ENCODE measurements at regions of chr19 and their contacts with region 1.

Region 1: GRCh38 chr19:7799640-7800355 is 30.2 kb upstream of the EVI5L start:
- DNase-seq: peak; percentile 73
- H3K4me3 ChIP-seq: peak overlapping the region in 1 of 2 experiments; percentile 54; a peak in 2 of 4 replicates
- H3K27ac ChIP-seq: no peak overlapping the region
- H3K4me1 ChIP-seq: no peaks in the 10 kb centered on the region
- H3K27me3 ChIP-seq: peaks cover 43% of the 10 kb centered on the region
- CTCF ChIP-seq: peak; percentile 65
- EP300 ChIP-seq: no peak
- RAD21 ChIP-seq: peak; percentile 80

Region 2: GRCh38 chr19:7355151-7355820 is 444.5 kb before region 1 on chr19:
- CTCF ChIA-PET with region 1: interaction called, 19 read pairs
- POLR2A ChIA-PET with region 1: no interaction called
- DNase-seq: no peak
- H3K4me3 ChIP-seq: no peak overlapping the region
- H3K27ac ChIP-seq: no peak overlapping the region
- H3K4me1 ChIP-seq: no peaks in the 10 kb centered on the region
- H3K27me3 ChIP-seq: no peaks in the 10 kb centered on the region
- CTCF ChIP-seq: no peak
- EP300 ChIP-seq: no peak
- RAD21 ChIP-seq: no peak

Region 3: DNA sequence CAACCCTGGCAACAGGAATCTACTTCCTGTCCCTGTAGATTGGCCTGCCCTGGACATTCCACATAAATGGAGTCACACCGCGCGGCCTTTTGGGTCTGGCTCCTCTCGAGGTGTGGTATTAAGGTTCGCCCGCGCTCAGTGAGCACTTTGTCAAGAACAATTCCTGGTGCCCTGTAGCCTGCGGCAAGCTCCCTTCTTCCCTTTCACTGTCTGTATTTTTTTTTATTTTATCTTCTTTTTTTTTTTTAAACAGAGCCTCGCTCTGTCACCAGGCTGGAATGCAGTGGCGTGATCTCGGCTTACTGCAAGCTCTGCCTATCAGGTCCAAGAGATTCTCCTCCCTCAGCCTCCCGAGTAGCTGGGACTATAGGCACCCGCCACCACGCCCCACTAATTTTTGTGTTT is 339.2 kb before region 1 on chr19:
- CTCF ChIA-PET with region 1: no interaction called
- POLR2A ChIA-PET with region 1: no interaction called
- DNase-seq: no peak
- H3K4me3 ChIP-seq: no peak overlapping the region
- H3K27ac ChIP-seq: no peak overlapping the region
- H3K4me1 ChIP-seq: no peaks in the 10 kb centered on the region
- H3K27me3 ChIP-seq: no peaks in the 10 kb centered on the region
- CTCF ChIP-seq: no peak
- EP300 ChIP-seq: no peak
- RAD21 ChIP-seq: no peak

Region 4: DNA sequence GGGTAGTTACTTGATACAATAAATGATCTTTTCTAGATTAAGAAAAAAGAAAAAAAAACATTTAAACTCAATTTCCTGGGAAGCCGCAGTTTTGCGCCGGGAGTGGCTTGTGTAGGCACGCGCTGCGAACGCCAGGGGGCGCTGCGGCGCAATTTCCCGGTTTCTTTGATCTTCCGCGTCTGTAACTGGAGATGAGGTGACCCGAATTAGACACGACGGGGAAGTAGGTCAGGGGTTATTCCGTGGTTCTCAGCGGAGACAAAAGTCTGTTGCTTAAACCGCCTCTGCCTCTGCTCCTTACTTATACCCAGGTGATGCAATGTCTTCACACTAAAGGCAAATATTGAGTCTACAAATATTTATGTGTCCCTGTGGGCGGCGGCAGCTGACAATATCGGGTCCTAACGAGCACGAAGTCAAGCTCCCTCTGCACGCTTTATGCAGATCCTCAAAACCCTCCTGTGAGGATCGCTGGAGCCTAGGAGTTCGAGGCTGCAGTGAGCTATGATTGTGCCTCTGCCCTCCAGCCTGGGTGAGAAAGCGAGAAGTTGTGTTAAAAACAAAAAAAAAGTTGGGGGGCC is 147.6 kb before region 1 on chr19:
- CTCF ChIA-PET with region 1: interaction called, 25 read pairs
- POLR2A ChIA-PET with region 1: no interaction called
- DNase-seq: peak; percentile 89
- H3K4me3 ChIP-seq: peak overlapping the region; percentile 23 to 61; a peak in 3 of 4 replicates
- H3K27ac ChIP-seq: no peak overlapping the region
- H3K4me1 ChIP-seq: peaks cover 0 to 3% of the 10 kb centered on the region in 2 experiments; a peak in 1 of 4 replicates
- H3K27me3 ChIP-seq: peaks cover 34% of the 10 kb centered on the region
- CTCF ChIP-seq: peak; percentile 99
- EP300 ChIP-seq: no peak
- RAD21 ChIP-seq: peak; percentile 62

Region 5: GRCh38 chr19:7674010-7675005 is 125.5 kb before region 1 on chr19:
- CTCF ChIA-PET with region 1: interaction called, 10 read pairs
- POLR2A ChIA-PET with region 1: no interaction called
- DNase-seq: peak; percentile 81
- H3K4me3 ChIP-seq: no peak overlapping the region
- H3K27ac ChIP-seq: no peak overlapping the region
- H3K4me1 ChIP-seq: no peaks in the 10 kb centered on the region; a peak in 1 of 4 replicates
- H3K27me3 ChIP-seq: peaks cover 56% of the 10 kb centered on the region
- CTCF ChIP-seq: no peak
- EP300 ChIP-seq: no peak
- RAD21 ChIP-seq: no peak

Region 6: GRCh38 chr19:7685541-7686416 is 114.0 kb before region 1 on chr19:
- CTCF ChIA-PET with region 1: interaction called, 35 read pairs
- POLR2A ChIA-PET with region 1: no interaction called
- DNase-seq: no peak
- H3K4me3 ChIP-seq: no peak overlapping the region
- H3K27ac ChIP-seq: no peak overlapping the region
- H3K4me1 ChIP-seq: peaks cover 0 to 9% of the 10 kb centered on the region in 2 experiments; a peak in 1 of 4 replicates
- H3K27me3 ChIP-seq: peaks cover 19% of the 10 kb centered on the region; the same call in 1 of the 2 replicates
- CTCF ChIP-seq: no peak
- EP300 ChIP-seq: no peak
- RAD21 ChIP-seq: no peak

Region 7: DNA sequence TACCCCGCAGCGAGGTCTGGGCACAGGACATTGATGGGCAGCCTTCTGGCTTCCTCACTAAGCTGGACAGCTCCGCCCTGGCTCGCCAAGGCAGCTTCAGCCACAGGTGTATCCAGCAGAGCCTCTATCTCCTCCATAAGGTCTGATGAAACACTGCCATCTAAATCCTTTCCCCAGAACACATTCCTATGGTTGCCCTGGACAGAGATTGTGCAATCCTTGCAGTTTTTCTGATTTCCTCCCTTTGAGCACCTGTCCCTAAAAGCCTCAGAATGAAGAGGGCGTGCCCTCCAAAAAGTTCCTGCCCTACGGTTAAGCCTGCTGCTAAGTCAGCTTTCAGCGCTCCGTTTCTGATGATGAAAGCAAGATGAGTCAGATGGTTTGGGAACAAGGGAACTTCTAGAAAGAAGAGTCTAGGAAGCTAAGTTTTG is 15.8 kb before region 1 on chr19:
- CTCF ChIA-PET with region 1: interaction called, 28 read pairs
- POLR2A ChIA-PET with region 1: no interaction called
- DNase-seq: no peak
- H3K4me3 ChIP-seq: no peak overlapping the region
- H3K27ac ChIP-seq: no peak overlapping the region
- H3K4me1 ChIP-seq: no peaks in the 10 kb centered on the region; a peak in 1 of 4 replicates
- H3K27me3 ChIP-seq: peaks cover 95% of the 10 kb centered on the region
- CTCF ChIP-seq: no peak
- EP300 ChIP-seq: no peak
- RAD21 ChIP-seq: no peak

Region 8: GRCh38 chr19:7815325-7815724 is 15.5 kb after region 1 on chr19:
- CTCF ChIA-PET with region 1: interaction called, 15 read pairs
- POLR2A ChIA-PET with region 1: no interaction called
- DNase-seq: no peak
- H3K4me3 ChIP-seq: no peak overlapping the region
- H3K27ac ChIP-seq: no peak overlapping the region
- H3K4me1 ChIP-seq: peaks cover 0 to under 1% of the 10 kb centered on the region in 2 experiments; a peak in 1 of 4 replicates
- H3K27me3 ChIP-seq: peaks cover 10% of the 10 kb centered on the region; the same call in 1 of the 2 replicates
- CTCF ChIP-seq: no peak
- EP300 ChIP-seq: no peak
- RAD21 ChIP-seq: no peak

Region 9: GRCh38 chr19:7845390-7846154 is 45.8 kb after region 1 on chr19:
- CTCF ChIA-PET with region 1: no interaction called
- POLR2A ChIA-PET with region 1: no interaction called
- DNase-seq: no peak
- H3K4me3 ChIP-seq: no peak overlapping the region
- H3K27ac ChIP-seq: no peak overlapping the region
- H3K4me1 ChIP-seq: peaks cover 0 to 8% of the 10 kb centered on the region in 2 experiments; a peak in 1 of 4 replicates
- H3K27me3 ChIP-seq: no peaks in the 10 kb centered on the region
- CTCF ChIP-seq: no peak
- EP300 ChIP-seq: no peak
- RAD21 ChIP-seq: no peak